ENCODE measurements at regions of chr19 and their contacts with region 1.

Region 1: GRCh38 chr19:21767065-21767800 is at the start of gene ZNF100:
- DNase-seq: peak; percentile 95
- H3K4me3 Mint-ChIP-seq: peak within 1 kb of the TSS; percentile 94
- H3K27ac Mint-ChIP-seq: peak within 1 kb of the TSS; percentile 83
- H3K4me1 Mint-ChIP-seq: peaks cover 17% of the 10 kb centered on the region
- H3K27me3 Mint-ChIP-seq: no peaks in the 10 kb centered on the region
- total RNA-seq, gene ZNF100: 20.8 and 24.1 TPM in 2 replicates

Region 2: GRCh38 chr19:21835810-21836444 is 68.7 kb after region 1 on chr19 and contains the start of gene ZNF43:
- intact Hi-C with region 1: loop called (anchors 2 kb)
- DNase-seq: peak; percentile 96
- H3K4me3 Mint-ChIP-seq: peak within 1 kb of the TSS; percentile 100
- H3K27ac Mint-ChIP-seq: peak within 1 kb of the TSS; percentile 100
- H3K4me1 Mint-ChIP-seq: peaks cover 3% of the 10 kb centered on the region
- H3K27me3 Mint-ChIP-seq: no peaks in the 10 kb centered on the region
- total RNA-seq, gene ZNF43: 30.3 and 33.3 TPM in 2 replicates

Region 3: GRCh38 chr19:21851596-21852345 is 84.5 kb after region 1 on chr19:
- intact Hi-C with region 1: loop called (anchors 1 kb)
- DNase-seq: peak; percentile 95
- H3K4me3 Mint-ChIP-seq: peak overlapping the region; percentile 92
- H3K27ac Mint-ChIP-seq: peak overlapping the region; percentile 93
- H3K4me1 Mint-ChIP-seq: peaks cover 11% of the 10 kb centered on the region
- H3K27me3 Mint-ChIP-seq: no peaks in the 10 kb centered on the region

Measured in activated CD4-positive, alpha-beta T cell treated with anti-CD3 and anti-CD28 coated beads, Interleukin-2, amount 10 ng/mL, durations not matched to agents 24 days and 14 days (primary cell).